Left ventricle myocardium superior (tissue), 1 donor: ENCODE measurements at regions of chr6 and their contacts with region 1.

Region 1: DNA sequence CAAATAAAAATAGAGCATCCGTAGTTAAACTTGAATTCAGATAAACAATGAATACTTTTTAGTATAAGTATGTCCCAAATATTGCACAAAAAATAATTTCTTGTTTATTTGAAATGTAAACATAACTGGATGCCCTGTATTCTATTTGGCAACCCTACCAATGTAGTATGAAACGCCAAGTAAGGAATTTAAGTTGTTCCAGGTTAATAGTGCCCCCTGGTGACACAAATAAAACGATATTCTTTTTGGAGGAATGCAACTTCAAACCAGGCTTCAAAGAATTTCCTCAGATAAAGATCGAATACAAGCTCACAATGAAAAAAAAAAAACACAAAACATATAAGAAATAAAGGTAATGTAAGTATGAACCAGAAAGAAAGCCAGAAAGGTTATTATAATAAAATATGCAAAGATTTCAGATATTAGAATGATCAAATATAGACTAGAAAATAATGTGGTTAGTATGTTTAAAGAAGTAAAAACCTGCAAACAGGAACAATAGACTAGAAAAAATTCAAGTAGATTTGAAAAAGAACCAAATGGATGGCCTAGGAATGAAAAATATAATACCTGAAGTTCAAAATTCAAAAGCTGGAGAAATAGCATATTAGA is 18.4 kb upstream of the AKAP7 start:
- DNase-seq: no peak
- ATAC-seq: no peak

Region 2: DNA sequence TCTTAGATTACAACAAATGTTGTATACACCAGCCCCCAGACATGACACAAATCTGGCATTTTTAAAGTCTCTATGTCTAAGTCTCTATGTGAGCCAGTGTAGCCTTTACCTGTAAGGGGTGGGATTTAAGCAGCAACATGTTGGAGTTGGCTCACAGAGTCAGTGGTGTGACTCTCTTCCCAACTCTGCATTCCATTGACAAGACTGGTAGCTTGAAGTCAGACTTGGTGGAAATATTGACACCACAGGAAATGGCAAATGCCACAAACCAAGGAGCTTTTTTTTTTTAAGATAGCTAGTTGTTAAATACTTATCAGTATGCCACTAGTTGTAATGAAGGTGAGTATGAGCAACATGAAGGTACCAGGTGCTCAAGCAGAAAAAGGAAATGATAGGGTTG is 392.8 kb before region 1 on chr6:
- intact Hi-C with region 1: no loop called
- DNase-seq: no peak
- ATAC-seq: no peak

Region 3: DNA sequence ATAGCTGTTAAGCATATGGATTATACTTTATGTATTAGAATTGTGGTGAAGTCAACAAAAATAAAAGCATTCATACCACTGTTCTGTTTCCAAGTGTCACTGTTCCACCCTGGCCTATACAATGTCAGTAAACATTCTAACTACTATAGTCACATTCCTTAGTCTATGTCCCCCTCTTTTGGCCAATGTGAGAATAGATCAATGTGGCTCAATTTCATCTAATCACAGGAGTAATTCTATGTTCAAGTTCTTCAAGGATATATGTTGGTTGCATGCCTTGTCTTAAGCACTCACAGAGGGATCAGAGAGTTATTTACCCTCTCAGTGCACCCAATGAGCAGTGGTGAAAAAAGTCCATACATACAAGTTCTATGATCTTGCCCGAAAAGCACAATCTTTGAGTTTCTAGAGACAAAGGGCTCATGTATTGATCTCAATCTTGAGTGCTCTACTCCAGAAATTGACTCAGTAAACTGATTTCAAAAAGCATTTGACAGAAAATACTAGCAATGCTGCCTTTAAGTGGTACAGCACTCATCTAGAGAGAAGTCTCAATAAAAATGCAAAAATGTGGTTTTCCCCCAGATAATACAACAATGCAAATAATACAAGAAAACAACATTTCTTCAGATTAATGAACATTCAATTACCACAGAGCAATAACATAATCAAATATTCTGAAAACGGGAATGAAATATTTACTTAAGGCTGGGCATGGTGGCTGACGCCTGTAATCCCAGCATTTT is 273.1 kb before region 1 on chr6:
- intact Hi-C with region 1: no loop called
- DNase-seq: no peak
- ATAC-seq: no peak

Region 4: DNA sequence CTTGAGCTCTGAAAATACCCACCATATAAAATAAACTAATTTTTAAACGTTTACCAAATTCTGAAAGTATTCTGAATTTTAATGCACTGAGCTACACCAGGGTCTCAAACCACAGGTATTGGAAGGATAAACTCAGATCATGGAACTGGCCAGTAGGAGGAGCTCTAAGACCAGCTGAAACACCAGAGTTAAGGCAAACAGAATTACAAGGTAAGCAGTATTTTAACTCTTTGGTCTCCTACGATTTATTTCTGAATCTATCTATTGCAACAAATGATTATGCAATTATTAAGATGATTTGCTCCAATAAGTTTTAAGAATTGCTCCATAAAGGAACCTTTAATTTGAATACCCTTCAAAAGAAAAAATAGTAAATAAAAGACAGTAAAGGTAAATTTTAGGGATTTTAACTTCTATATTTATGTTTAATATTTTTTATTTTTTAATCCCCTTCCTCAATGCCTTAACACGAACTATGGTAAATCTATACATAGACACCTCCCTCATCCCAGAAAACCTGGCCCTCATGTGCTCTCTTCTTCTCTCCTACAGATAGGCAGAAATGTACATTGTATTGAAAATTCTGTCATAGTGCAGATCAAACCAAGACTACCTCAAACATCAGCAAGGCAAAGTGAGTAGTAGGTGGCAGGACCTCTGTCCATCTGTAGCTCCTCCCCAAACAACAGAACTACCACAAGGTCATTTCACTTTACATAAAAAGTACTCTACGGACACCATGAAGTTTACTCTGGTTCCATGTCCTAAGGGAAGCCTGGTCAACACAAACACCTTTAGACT is 231.3 kb before region 1 on chr6:
- intact Hi-C with region 1: loop called (anchors 5 kb)
- DNase-seq: no peak
- ATAC-seq: peak; percentile 88